Panc1 (cell line): ENCODE measurements at regions of chr9 and their contacts with region 1.

Region 1: DNA sequence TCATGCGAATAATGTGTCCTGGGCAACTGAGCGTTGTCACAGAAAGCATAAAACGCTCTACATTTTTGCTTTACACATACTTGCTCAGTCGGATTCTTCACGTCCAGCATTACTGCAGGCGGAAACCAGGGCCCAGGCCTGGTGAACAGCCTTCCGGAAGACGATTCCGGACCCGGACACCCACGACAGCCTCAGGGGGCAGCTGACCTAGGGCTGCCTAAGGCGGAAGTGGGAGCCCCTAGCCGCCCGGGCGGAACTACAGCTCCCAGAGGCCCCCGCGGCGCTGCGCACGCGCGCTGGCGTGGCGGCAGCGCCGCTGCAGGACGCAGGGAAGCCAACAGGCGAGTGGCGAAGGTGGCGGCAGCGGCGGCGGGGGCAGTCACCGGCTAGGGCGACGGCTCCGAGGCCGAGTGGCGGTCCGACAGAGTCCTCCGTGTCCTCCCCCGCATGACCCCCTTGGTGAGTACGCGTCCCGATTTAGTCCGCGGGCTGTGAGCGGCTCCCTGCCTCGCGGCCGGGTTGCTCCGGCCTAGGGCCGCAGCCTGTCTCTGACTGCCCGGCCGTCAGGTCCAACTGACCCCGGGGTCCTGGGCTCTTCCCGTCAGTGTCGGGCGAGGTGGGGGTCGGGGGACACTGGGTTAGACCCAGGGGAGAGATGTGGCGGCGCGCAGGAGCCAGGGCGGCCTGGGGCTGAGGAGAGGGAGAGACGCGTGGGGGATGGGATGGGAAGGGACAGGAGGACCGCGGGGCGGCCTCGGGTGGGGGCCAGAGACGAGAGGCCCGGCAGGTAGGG is at the start of gene GAPVD1:
- DNase-seq: no peak
- ATAC-seq: peak; percentile 99
- H3K4me3 ChIP-seq: peak within 1 kb of the TSS; percentile 91
- H3K27ac ChIP-seq: peak within 1 kb of the TSS; percentile 85
- H3K4me1 ChIP-seq: peaks cover 11% of the 10 kb centered on the region
- H3K27me3 ChIP-seq: no peaks in the 10 kb centered on the region
- CTCF ChIP-seq: no peak; the same call in none of the 2 replicates
- total RNA-seq, gene GAPVD1: 48.6 TPM

Region 2: GRCh38 chr9:125241000-125241862 is 20.5 kb before region 1 on chr9 and contains the start of gene HSPA5:
- CTCF ChIA-PET with region 1: no interaction called
- POLR2A ChIA-PET with region 1: interaction called, 11 read pairs
- in situ Hi-C with region 1: no loop called
- intact Hi-C with region 1: no loop called
- DNase-seq: peak; percentile 97
- ATAC-seq: peak; percentile 95
- H3K4me3 ChIP-seq: peak within 1 kb of the TSS; percentile 89 to 95
- H3K27ac ChIP-seq: peak within 1 kb of the TSS; percentile 98
- H3K4me1 ChIP-seq: peaks cover 37% of the 10 kb centered on the region
- H3K27me3 ChIP-seq: no peaks in the 10 kb centered on the region
- CTCF ChIP-seq: no peak
- total RNA-seq, gene HSPA5: 281 TPM